Psoas muscle (tissue), 8 donors: ENCODE measurements at regions of chr21 and their contacts with region 1.

Region 1: DNA sequence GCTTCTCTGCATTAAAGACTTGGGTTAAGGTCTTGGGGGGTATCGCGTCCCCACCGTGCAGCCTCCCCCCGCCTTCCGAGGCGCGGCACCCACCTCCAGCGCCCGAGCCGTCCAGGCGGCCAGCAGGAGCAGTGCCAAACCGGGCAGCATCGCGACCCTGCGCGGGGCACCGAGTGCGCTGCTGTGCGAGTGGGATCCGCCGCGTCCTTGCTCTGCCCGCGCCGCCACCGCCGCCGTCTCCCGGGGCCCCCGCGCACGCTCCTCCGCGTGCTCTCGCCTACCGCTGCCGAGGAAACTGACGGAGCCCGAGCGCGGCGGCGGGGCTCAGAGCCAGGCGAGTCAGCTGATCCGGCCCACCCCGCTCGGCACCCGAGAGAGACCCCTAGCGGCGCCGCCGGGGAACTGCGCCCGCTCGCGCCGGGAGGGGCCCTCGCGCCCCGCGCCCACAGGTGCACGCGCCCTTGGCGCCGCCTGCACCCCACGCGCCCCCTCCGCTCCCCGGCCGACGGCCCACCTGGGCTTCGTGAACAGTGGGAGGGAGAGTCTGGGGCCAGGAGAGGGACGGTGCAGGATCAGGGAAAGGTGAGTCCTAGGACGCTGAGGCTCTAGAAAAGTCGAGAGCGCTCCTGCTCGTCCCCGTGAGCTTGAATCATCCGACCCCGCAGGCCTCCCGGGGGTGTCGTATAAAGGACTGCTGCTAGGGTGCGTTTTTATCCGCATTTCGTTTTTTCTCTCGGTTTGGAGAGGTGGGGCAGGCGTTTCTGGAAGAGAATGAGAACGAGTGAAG is at the start of gene APP:
- DNase-seq: peak; percentile 87 to 90
- ATAC-seq: peak; percentile 90 to 93 (median 92)
- H3K4me3 ChIP-seq: peak within 1 kb of the TSS; percentile 77
- H3K27ac ChIP-seq: peak within 1 kb of the TSS; percentile 68
- H3K4me1 ChIP-seq: peaks cover 4% of the 10 kb centered on the region
- H3K27me3 ChIP-seq: peaks cover 0 to 23% (median 0%) of the 10 kb centered on the region in 3 donors
- CTCF ChIP-seq: peak; percentile 99
- total RNA-seq, gene APP: 56.6 to 118 (median 77.7) TPM

Region 2: DNA sequence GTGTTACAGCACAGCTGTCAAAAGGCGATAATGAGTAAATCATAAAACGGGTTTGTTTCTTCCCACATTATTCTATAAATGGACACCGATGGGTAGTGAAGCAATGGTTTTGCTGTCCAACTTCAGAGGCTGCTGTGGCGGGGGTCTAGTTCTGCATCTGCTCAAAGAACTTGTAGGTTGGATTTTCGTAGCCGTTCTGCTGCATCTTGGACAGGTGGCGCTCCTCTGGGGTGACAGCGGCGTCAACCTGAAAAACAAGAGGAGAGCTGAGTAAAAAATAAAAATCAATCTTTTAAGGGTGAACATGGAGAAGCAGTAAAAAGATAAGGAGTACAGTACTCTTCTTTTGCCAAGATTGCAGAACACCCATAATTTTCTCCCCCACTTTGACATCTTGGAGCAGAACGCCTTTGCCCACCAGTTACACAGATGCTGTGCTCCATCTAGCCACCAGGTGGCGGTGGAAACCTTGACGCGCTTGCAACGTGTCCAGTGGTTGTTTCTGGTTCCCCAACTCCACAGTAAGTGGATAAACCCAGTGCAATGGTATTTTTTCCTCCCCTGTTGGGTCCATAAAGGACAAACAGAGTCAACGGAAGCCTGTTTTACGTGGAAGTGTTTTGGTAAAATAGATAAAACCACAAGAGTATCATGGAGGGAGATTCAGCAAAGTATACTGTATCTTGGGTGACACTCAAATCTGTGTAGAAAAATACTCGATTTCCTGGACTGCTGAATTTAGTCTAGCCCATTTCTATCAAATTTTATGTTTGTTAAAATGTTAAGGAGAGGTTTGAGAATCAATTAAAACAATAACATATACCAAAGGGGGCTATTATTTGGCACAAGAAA is 288.9 kb before region 1 on chr21:
- intact Hi-C with region 1: loop called (anchors 2 to 5 kb)
- DNase-seq: peak; percentile 59 to 82
- ATAC-seq: peak; percentile 72 to 86 (median 74)
- H3K4me3 ChIP-seq: no peak overlapping the region
- H3K27ac ChIP-seq: no peak overlapping the region
- H3K4me1 ChIP-seq: no peaks in the 10 kb centered on the region
- H3K27me3 ChIP-seq: no peaks in the 10 kb centered on the region
- CTCF ChIP-seq: peak; percentile 97

Region 3: GRCh38 chr21:25895565-25896205 is 275.0 kb before region 1 on chr21:
- intact Hi-C with region 1: loop called in 1 of 2 experiments (anchors 2 kb)
- DNase-seq: no peak
- ATAC-seq: peak; percentile 51 to 75 (median 68)
- H3K4me3 ChIP-seq: no peak overlapping the region
- H3K27ac ChIP-seq: no peak overlapping the region
- H3K4me1 ChIP-seq: no peaks in the 10 kb centered on the region
- H3K27me3 ChIP-seq: no peaks in the 10 kb centered on the region
- CTCF ChIP-seq: peak; percentile 54